ENCODE measurements at regions of chr4 and their contacts with region 1.

Region 1: GRCh38 chr4:106369456-106370060 is 980 bp upstream of the GIMD1 start:
- DNase-seq: peak; percentile 43
- H3K4me3 Mint-ChIP-seq: no peak overlapping the region
- H3K27ac Mint-ChIP-seq: no peak overlapping the region
- H3K4me1 Mint-ChIP-seq: peaks cover 15% of the 10 kb centered on the region
- H3K27me3 Mint-ChIP-seq: no peaks in the 10 kb centered on the region
- CTCF ChIP-seq: peak; percentile 46

Region 2: GRCh38 chr4:106502106-106502699 is 132.6 kb after region 1 on chr4:
- CTCF ChIA-PET with region 1: interaction called, 3 read pairs
- intact Hi-C with region 1: loop called (anchors 1 kb)
- DNase-seq: peak; percentile 61
- H3K4me3 Mint-ChIP-seq: peak overlapping the region; percentile 14
- H3K27ac Mint-ChIP-seq: no peak overlapping the region
- H3K4me1 Mint-ChIP-seq: no peaks in the 10 kb centered on the region
- H3K27me3 Mint-ChIP-seq: no peaks in the 10 kb centered on the region
- CTCF ChIP-seq: peak; percentile 66

Measured in Calu3 (cell line).